ENCODE measurements at regions of chr9 and their contacts with region 1.

Region 1: DNA sequence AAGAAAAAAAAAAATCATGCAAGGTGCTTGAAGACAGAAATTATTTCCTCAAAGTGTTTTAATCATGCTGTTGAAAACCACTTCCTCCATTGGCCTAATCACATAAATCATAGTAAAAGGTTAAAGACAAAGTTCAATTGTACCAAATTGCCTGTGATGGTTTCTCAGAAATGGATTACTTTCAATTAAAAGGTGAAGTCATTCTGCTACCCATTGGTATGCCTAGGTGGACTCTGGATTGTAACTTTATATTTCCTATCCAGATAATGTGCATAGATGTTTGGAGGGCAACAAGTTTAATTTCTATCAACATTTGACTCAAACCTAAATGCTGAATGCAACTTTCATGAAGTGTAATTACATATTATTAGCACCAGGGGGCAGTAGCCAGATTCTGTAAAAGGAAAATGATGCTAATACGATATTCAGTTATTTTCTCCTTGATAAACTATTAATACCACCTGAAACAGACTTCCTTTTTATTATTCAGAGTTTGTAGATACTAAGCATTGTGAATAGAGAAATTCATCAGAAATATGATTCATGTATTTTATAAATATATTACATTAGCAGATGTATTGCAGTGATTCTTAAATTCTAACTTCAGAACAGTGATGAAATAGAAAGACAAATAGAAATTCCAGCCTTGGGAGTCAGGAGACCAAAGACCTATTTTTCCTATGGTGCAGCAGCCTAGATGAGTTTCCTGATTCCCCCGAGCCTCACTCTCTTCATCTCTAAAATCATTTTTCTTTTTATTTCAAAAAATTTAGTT is 148.2 kb downstream of the CAAP1 start:
- DNase-seq: peak; percentile 14
- ATAC-seq: no peak
- H3K4me3 ChIP-seq: no peak overlapping the region
- H3K27ac ChIP-seq: no peak overlapping the region
- H3K4me1 ChIP-seq: peaks cover 26% of the 10 kb centered on the region
- H3K27me3 ChIP-seq: no peaks in the 10 kb centered on the region; a peak in 1 of 5 replicates
- CTCF ChIP-seq: peak; percentile 59
- EP300 ChIP-seq: no peak
- POLR2A ChIP-seq: no peak
- RAD21 ChIP-seq: no peak

Region 2: DNA sequence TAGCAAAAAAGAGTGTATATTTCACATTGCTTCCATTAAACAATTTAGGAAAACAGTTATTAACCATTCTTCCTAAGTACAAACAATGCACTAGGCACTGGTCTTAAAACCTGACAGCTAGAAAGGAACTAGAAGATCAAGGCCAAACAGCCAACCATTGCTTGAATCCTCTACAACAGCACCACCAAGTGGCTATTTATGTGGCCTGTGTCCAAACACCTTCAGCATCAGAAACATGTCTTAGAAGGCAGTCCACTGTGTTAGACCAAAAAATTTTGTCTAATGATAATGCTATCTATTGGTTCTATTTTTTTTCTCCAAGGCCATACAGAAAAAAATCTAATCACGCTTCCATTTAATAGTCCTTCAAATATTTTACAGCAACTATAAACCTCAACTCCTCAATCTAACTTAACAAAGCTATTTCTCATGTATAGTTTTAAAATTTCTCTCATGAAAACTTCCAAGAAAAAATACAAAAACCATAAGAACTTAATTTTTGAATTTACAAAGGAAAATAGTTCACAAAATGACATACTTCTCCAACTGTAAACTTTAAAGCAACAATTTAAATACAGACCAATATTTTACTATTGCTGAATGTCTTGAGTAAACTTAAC is 112.1 kb after region 1 on chr9:
- CTCF ChIA-PET with region 1: interaction called, 3 read pairs
- POLR2A ChIA-PET with region 1: no interaction called
- in situ Hi-C with region 1: loop called (anchors 5 kb)
- intact Hi-C with region 1: loop called (anchors 1 kb)
- DNase-seq: peak; percentile 49
- ATAC-seq: peak; percentile 80
- H3K4me3 ChIP-seq: no peak overlapping the region
- H3K27ac ChIP-seq: no peak overlapping the region
- H3K4me1 ChIP-seq: no peaks in the 10 kb centered on the region
- H3K27me3 ChIP-seq: no peaks in the 10 kb centered on the region
- CTCF ChIP-seq: peak; percentile 76
- EP300 ChIP-seq: no peak
- POLR2A ChIP-seq: no peak
- RAD21 ChIP-seq: no peak

Region 3: DNA sequence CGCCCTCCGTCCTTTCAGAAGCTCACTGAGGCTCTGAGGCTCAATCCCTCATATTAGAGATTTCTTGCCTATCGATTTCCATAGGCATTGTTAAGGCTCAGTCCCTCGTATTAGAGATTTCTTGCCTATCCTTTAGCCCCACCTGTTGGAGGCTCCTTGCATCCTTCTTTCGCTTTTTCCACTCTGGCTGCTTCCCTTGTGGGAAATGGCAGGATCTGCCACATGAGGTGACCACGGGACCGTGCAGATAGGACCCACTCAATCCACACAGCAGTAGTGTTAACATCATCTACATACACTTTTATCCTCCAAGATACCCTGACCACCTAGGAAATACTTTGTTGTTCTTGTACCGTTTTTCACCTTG is 231.3 kb after region 1 on chr9:
- CTCF ChIA-PET with region 1: interaction called, 3 read pairs
- POLR2A ChIA-PET with region 1: no interaction called
- in situ Hi-C with region 1: loop called (anchors 5 kb)
- intact Hi-C with region 1: loop called (anchors 1 kb)
- DNase-seq: peak; percentile 32
- ATAC-seq: peak; percentile 86
- H3K4me3 ChIP-seq: no peak overlapping the region
- H3K27ac ChIP-seq: no peak overlapping the region
- H3K4me1 ChIP-seq: peaks cover 9% of the 10 kb centered on the region
- H3K27me3 ChIP-seq: no peaks in the 10 kb centered on the region
- CTCF ChIP-seq: peak; percentile 66
- EP300 ChIP-seq: no peak
- POLR2A ChIP-seq: no peak
- RAD21 ChIP-seq: 0 out of 2 replicates have a peak, but pooled peaks have one; percentile 28